ENCODE measurements at regions of chr3 and their contacts with region 1.

Region 1: DNA sequence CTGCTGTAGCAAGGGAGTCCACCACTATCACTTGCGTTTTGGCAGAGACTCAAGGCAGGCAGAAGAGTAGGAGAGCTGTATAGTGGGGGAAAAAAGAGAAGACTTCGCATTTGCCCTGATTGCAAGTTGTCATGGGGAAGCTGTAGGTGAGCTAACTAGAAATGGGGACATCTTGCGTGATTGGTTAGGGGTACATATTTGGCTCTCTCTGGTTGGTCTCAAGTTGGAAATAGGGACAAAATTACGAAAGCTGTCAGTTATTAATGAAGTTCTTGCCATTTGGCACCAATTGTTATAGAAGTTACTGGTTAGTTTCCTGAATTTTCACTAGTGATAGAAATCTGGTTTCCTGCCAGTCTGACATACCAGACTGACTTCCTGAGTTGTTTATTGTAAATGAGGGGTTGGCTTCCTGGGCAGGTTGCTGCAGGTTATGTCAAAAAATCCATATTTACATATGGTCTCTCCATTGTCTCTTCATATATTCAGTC is 8.2 kb upstream of the SENP7 start:
- DNase-seq: peak; percentile 92
- H3K4me3 ChIP-seq: peak overlapping the region in 1 of 3 experiments; percentile 10
- H3K27ac ChIP-seq: peak overlapping the region; percentile 96
- H3K4me1 ChIP-seq: peaks cover 37% of the 10 kb centered on the region
- H3K27me3 ChIP-seq: no peaks in the 10 kb centered on the region
- CTCF ChIP-seq: no peak
- POLR2A ChIP-seq: peak; percentile 46

Region 2: DNA sequence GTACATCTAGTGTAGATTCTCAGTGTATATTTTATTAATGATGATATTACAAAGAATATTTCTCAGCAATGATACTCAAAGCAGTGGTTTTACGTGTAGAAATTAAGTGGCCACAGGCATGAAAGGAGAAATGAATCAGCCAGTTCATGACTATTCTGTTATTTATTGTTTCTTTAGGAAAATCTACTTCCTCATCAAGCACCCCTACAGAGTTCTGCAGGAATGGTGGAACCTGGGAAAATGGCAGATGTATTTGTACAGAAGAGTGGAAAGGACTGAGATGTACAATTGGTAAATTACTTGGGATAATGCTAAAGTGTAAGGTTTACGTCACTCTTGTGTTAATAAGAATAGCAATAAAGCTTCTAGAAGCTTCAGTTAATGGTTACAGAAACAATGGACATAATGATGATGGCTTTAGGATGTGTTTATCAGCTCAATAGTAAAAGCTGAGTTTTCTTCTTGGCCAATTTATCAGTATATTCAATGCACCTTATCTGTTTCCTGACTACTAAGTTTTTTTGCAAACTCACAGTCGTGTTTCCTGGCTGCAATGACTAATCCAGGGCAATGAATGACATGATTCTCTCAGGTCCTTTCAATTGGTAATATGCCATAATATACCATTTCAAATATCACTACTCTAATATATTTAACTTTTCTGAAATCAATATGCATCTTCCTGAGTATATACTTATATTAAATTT is 891.7 kb before region 1 on chr3:
- CTCF ChIA-PET with region 1: no interaction called
- POLR2A ChIA-PET with region 1: no interaction called
- dilution Hi-C with region 1: no loop called
- intact Hi-C with region 1: no loop called
- DNase-seq: peak; percentile 88
- H3K4me3 ChIP-seq: peak overlapping the region in 1 of 3 experiments; percentile 12
- H3K27ac ChIP-seq: peak overlapping the region; percentile 84
- H3K4me1 ChIP-seq: peaks cover 16% of the 10 kb centered on the region
- H3K27me3 ChIP-seq: no peaks in the 10 kb centered on the region
- CTCF ChIP-seq: no peak
- POLR2A ChIP-seq: peak; percentile 55

Region 3: GRCh38 chr3:101532783-101533602 is 11.7 kb after region 1 on chr3:
- CTCF ChIA-PET with region 1: interaction called, 7 read pairs
- POLR2A ChIA-PET with region 1: no interaction called
- dilution Hi-C with region 1: no loop called
- intact Hi-C with region 1: loop called (anchors 1 kb)
- DNase-seq: peak; percentile 39
- H3K4me3 ChIP-seq: no peak overlapping the region
- H3K27ac ChIP-seq: peak overlapping the region; percentile 73
- H3K4me1 ChIP-seq: peaks cover 32% of the 10 kb centered on the region
- H3K27me3 ChIP-seq: no peaks in the 10 kb centered on the region
- CTCF ChIP-seq: no peak
- POLR2A ChIP-seq: peak; percentile 32

Region 4: GRCh38 chr3:101544161-101544850 is 23.1 kb after region 1 on chr3:
- CTCF ChIA-PET with region 1: no interaction called
- POLR2A ChIA-PET with region 1: interaction called, 13 read pairs
- dilution Hi-C with region 1: no loop called
- intact Hi-C with region 1: no loop called
- DNase-seq: no peak
- H3K4me3 ChIP-seq: no peak overlapping the region
- H3K27ac ChIP-seq: no peak overlapping the region
- H3K4me1 ChIP-seq: no peaks in the 10 kb centered on the region
- H3K27me3 ChIP-seq: no peaks in the 10 kb centered on the region
- CTCF ChIP-seq: no peak
- POLR2A ChIP-seq: no peak

Region 5: GRCh38 chr3:101561630-101562328 is 40.5 kb after region 1 on chr3 and contains the start of gene TRMT10C:
- CTCF ChIA-PET with region 1: no interaction called
- POLR2A ChIA-PET with region 1: interaction called, 4 read pairs
- dilution Hi-C with region 1: no loop called
- intact Hi-C with region 1: loop called (anchors 1 kb)
- DNase-seq: peak; percentile 95
- H3K4me3 ChIP-seq: peak within 1 kb of the TSS; percentile 97 to 98 (median 98)
- H3K27ac ChIP-seq: peak within 1 kb of the TSS; percentile 89
- H3K4me1 ChIP-seq: peaks cover 10% of the 10 kb centered on the region
- H3K27me3 ChIP-seq: peaks cover 0 to 10% of the 10 kb centered on the region in 2 experiments
- CTCF ChIP-seq: no peak
- POLR2A ChIP-seq: peak; percentile 94
- total RNA-seq, gene TRMT10C: 28.0 and 29.6 TPM in 2 replicates

Measured in endothelial cell of umbilical vein (primary cell).